CD14-positive monocyte (primary cell): ENCODE measurements at regions of chr4 and their contacts with region 1.

Region 1: GRCh38 chr4:4659871-4660651 is 118.2 kb upstream of the STX18 start:
- DNase-seq: peak in 1 of 3 donors; percentile 0
- H3K4me3 ChIP-seq: no peak overlapping the region
- H3K4me3 Mint-ChIP-seq: no peak overlapping the region
- H3K27ac ChIP-seq: no peak overlapping the region
- H3K27ac Mint-ChIP-seq: no peak overlapping the region
- H3K4me1 ChIP-seq: no peaks in the 10 kb centered on the region
- H3K4me1 Mint-ChIP-seq: peaks cover 12% of the 10 kb centered on the region
- H3K27me3 ChIP-seq: no peaks in the 10 kb centered on the region
- H3K27me3 Mint-ChIP-seq: peaks cover 0 to 2% (median 0%) of the 10 kb centered on the region in 3 donors
- CTCF ChIP-seq: no peak

Region 2: GRCh38 chr4:4507923-4508322 is 152.1 kb before region 1 on chr4:
- intact Hi-C with region 1: loop called in 1 of 2 experiments (anchors 5 kb)
- DNase-seq: no peak
- H3K4me3 ChIP-seq: no peak overlapping the region
- H3K4me3 Mint-ChIP-seq: no peak overlapping the region
- H3K27ac ChIP-seq: no peak overlapping the region
- H3K27ac Mint-ChIP-seq: no peak overlapping the region
- H3K4me1 ChIP-seq: peaks cover 2 to 5% of the 10 kb centered on the region in 2 donors
- H3K4me1 Mint-ChIP-seq: peaks cover 10% of the 10 kb centered on the region
- H3K27me3 ChIP-seq: no peaks in the 10 kb centered on the region
- H3K27me3 Mint-ChIP-seq: peaks cover 0 to 1% (median 0%) of the 10 kb centered on the region in 3 donors
- CTCF ChIP-seq: peak; percentile 22

Region 3: DNA sequence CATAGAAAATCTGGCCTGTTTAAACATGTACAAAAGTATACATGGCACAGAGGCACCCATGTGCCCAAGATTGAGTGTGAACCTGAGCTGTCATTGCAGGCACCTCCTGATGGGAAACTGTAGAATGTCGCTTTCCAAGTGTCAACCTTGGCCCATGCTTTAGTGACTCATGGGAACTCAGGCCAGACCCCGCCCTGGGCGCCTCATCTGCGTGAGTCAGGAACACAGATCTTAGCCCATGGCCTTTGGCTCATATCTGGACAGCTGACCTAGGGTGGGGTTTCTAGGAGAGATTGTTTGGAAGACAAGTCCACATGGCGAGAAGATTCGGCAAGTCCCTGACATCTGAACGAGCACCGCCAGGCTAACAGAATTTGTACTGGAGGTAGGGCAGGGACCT is 309.2 kb after region 1 on chr4:
- intact Hi-C with region 1: no loop called
- DNase-seq: no peak
- H3K4me3 ChIP-seq: no peak overlapping the region
- H3K4me3 Mint-ChIP-seq: no peak overlapping the region
- H3K27ac ChIP-seq: no peak overlapping the region
- H3K27ac Mint-ChIP-seq: no peak overlapping the region
- H3K4me1 ChIP-seq: no peaks in the 10 kb centered on the region
- H3K4me1 Mint-ChIP-seq: no peaks in the 10 kb centered on the region
- H3K27me3 ChIP-seq: peaks cover 0 to 2% of the 10 kb centered on the region in 2 donors
- H3K27me3 Mint-ChIP-seq: peaks cover 0 to 3% (median 2%) of the 10 kb centered on the region in 3 donors
- CTCF ChIP-seq: no peak